ENCODE measurements at regions of chr6 and their contacts with region 1.

Region 1: GRCh38 chr6:57262901-57263694 is 41.0 kb upstream of the RAB23 start:
- DNase-seq: no peak
- H3K4me3 ChIP-seq: no peak overlapping the region
- H3K27ac ChIP-seq: peak overlapping the region; percentile 80 to 90 (median 82)
- H3K4me1 ChIP-seq: peaks cover 5 to 81% (median 77%) of the 10 kb centered on the region in 4 donors
- H3K27me3 ChIP-seq: no peaks in the 10 kb centered on the region
- CTCF ChIP-seq: no peak
- EP300 ChIP-seq: no peak
- POLR2A ChIP-seq: no peak

Region 2: DNA sequence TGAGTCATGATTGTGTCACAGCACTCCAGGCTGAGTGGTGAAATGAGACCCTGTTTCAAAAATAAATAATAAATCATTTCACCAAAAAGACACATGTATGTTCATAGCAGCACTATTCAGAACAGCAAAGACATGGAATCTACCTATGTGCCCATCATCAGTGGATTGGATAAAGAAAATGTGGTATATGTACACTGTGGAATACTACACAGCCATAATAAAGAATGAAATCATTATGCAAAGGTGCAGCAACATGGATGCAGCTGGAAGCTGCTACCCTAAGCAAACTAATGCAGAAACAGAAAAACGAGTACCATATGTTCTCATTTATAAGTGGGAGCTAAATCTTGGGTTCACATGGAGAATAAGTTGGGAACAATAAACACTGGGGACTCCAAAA is 140.0 kb before region 1 on chr6:
- intact Hi-C with region 1: no loop called
- DNase-seq: no peak
- H3K4me3 ChIP-seq: no peak overlapping the region
- H3K27ac ChIP-seq: no peak overlapping the region
- H3K4me1 ChIP-seq: peaks cover 0 to 8% (median 4%) of the 10 kb centered on the region in 4 donors
- H3K27me3 ChIP-seq: no peaks in the 10 kb centered on the region
- CTCF ChIP-seq: no peak
- EP300 ChIP-seq: no peak
- POLR2A ChIP-seq: no peak

Region 3: DNA sequence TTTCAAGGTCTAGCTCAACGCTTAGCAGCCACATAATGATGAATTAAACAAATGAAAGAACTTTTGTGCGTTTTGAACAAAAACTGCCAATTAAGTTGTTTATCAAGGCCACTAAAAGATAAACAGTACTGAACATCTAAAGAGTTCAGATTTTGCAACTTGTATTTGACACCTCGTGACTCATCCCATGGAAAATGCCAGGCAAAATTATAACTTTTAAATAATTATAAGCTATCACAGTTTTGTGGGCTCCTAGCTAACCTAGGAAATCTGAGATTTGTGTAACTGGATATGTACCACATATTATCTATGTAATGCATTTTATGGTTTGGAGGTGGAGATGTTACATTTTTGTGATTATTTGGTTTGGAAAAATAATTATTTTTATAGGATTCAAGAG is 100.6 kb before region 1 on chr6:
- intact Hi-C with region 1: no loop called
- DNase-seq: no peak
- H3K4me3 ChIP-seq: no peak overlapping the region
- H3K27ac ChIP-seq: no peak overlapping the region
- H3K4me1 ChIP-seq: no peaks in the 10 kb centered on the region
- H3K27me3 ChIP-seq: no peaks in the 10 kb centered on the region
- CTCF ChIP-seq: no peak
- EP300 ChIP-seq: no peak
- POLR2A ChIP-seq: no peak

Region 4: DNA sequence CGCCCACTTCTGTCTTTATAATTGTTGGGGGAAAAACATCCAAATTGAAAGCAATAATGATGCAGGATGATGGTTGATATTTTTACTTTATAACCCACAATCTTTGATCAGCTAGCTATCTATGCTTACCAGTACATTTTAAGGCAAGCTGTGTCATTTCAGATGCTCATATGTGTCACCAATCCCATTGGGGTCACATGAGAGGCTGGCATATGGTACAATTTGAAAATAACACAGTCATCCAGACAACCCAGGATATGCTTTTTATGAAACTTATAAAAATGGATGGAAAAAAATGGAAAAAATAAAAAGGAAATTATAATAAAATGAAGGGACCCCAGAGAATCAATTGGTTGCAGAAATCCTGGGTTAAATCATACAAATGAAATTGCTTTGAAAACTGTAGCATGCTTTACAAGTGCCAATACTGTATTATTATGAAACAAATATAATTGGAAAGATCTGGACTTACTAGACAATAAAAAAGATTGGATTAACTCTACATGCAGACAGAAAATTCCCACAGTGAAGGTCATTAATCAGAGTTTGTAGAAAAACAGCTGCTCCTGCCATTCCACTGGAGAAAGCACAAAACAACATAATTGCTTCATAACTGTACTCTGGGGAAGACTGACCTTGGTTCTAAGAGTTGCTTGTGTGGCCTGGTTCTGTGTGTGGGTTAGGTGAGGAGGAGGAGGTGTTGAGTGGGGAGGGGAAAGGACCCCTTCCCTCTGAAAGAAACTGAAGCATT is 41.0 kb after region 1 on chr6:
- intact Hi-C with region 1: no loop called
- DNase-seq: no peak
- H3K4me3 ChIP-seq: no peak overlapping the region
- H3K27ac ChIP-seq: peak overlapping the region; percentile 64 to 76 (median 70)
- H3K4me1 ChIP-seq: peaks cover 0 to 50% (median 45%) of the 10 kb centered on the region in 4 donors
- H3K27me3 ChIP-seq: no peaks in the 10 kb centered on the region
- CTCF ChIP-seq: no peak
- EP300 ChIP-seq: no peak
- POLR2A ChIP-seq: no peak

Region 5: GRCh38 chr6:57316581-57317059 is 53.5 kb after region 1 on chr6:
- intact Hi-C with region 1: loop called (anchors 5 kb)
- DNase-seq: no peak
- H3K4me3 ChIP-seq: peak overlapping the region; percentile 55 to 70 (median 62)
- H3K27ac ChIP-seq: peak overlapping the region; percentile 62 to 74 (median 69)
- H3K4me1 ChIP-seq: peaks cover 13 to 38% (median 27%) of the 10 kb centered on the region in 4 donors
- H3K27me3 ChIP-seq: no peaks in the 10 kb centered on the region
- CTCF ChIP-seq: peak; percentile 72 to 81 (median 77)
- EP300 ChIP-seq: no peak
- POLR2A ChIP-seq: no peak